Activated CD4-positive, alpha-beta memory T cell treated with anti-CD3 and anti-CD28 coated beads for 36 hours (primary cell): ENCODE measurements at regions of chr7 and their contacts with region 1.

Region 1: DNA sequence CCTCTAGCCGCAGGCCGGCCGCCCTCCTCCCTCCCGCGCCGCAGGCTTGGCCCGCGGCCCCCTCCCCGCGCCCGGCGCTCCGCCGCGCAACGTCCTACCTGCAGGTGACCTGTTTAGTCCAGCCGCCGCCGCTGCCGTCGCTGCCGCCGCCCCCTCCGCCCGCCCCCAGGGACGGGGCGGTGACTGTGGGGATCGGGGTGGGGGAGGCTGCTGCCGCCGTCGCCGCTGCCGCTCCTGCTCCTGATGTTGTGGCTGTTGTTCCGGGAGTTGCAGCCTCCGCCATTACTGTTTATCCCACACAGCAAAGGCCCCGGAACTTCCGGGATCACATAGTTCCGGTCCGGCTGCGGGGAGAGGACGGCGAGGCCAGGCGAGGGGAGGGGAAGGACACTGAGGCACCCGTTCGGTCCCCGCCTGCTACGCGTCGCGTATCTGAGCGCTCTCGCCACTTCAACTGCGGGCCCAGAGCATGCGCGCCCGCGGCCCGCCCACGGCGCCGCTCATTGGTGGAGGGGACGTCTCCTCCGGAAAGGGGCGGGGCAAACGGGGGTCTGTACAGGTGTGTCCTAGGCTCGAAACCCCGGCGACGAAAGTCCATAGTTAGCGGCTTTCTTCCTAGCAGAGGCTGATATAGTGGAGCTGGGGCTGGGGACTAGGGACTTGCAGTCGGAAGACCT is at the start of gene MKRN1:
- DNase-seq: peak; percentile 96
- H3K4me3 Mint-ChIP-seq: peak within 1 kb of the TSS; percentile 97
- H3K27ac Mint-ChIP-seq: peak within 1 kb of the TSS; percentile 96
- H3K4me1 Mint-ChIP-seq: peaks cover 27% of the 10 kb centered on the region
- H3K27me3 Mint-ChIP-seq: no peaks in the 10 kb centered on the region
- total RNA-seq, gene MKRN1: 104 to 106 TPM

Region 2: DNA sequence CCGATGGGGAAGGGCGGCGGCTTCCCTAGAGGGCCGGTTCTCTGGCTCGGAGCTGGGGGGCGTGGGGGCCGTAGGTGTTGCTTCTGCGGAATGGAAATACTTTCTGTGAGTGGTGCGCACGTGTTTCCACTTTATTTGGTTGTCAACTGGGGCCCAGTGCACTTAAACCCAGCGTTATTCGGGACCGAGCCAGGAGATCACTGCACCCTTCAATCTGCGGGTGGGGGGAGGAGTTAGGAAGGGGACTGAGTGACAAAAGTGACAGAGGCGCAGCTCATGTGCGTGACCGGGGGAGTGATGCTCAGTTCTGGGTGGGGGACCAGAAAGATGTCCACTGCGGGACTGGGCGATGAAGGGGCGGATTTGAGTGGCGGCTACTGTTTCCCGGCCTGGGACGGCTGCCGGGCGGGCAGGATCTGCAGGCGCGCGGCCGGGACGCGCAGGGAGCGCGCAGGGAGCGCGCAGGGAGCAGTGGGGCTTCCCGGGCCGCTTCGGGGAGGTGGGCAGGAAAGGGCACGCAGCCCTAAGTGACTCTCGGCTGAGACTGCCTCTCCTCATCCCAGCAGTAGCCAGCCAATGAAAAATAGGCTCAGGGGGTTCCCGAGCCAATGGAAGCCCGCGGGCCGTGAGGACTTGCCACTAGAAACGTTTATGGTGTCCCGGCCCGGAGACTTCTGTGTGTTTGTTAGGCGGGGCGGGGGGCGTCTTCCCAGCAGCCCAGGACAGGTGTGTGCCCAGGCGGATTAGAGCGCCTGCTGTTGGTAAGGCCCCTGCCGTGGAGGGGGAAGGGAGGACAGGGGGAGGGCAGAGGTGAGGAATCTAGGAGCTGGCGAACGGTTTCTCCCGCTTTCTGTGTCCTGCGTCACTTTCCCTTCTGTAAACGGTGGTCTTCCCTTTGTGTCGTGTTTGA is 248.1 kb before region 1 on chr7:
- CTCF ChIA-PET with region 1: no interaction called
- POLR2A ChIA-PET with region 1: interaction called, 5 read pairs
- intact Hi-C with region 1: loop called (anchors 5 kb)
- DNase-seq: peak; percentile 78
- H3K4me3 Mint-ChIP-seq: peak overlapping the region; percentile 79
- H3K27ac Mint-ChIP-seq: peak overlapping the region; percentile 99
- H3K4me1 Mint-ChIP-seq: peaks cover 32% of the 10 kb centered on the region
- H3K27me3 Mint-ChIP-seq: no peaks in the 10 kb centered on the region

Region 3: GRCh38 chr7:140390466-140391190 is 88.6 kb before region 1 on chr7:
- CTCF ChIA-PET with region 1: no interaction called
- POLR2A ChIA-PET with region 1: interaction called, 9 read pairs
- intact Hi-C with region 1: loop called (anchors 2 kb)
- DNase-seq: peak; percentile 65
- H3K4me3 Mint-ChIP-seq: no peak overlapping the region
- H3K27ac Mint-ChIP-seq: no peak overlapping the region
- H3K4me1 Mint-ChIP-seq: peaks cover 10% of the 10 kb centered on the region
- H3K27me3 Mint-ChIP-seq: no peaks in the 10 kb centered on the region

Region 4: GRCh38 chr7:140463111-140463510 is 16.1 kb before region 1 on chr7:
- CTCF ChIA-PET with region 1: interaction called, 7 read pairs
- POLR2A ChIA-PET with region 1: interaction called, 16 read pairs
- intact Hi-C with region 1: no loop called
- DNase-seq: no peak
- H3K4me3 Mint-ChIP-seq: no peak overlapping the region
- H3K27ac Mint-ChIP-seq: peak overlapping the region; percentile 18
- H3K4me1 Mint-ChIP-seq: peaks cover 24% of the 10 kb centered on the region
- H3K27me3 Mint-ChIP-seq: no peaks in the 10 kb centered on the region

Region 5: GRCh38 chr7:140696680-140697446 is 217.7 kb after region 1 on chr7 and contains the start of gene NDUFB2:
- CTCF ChIA-PET with region 1: no interaction called
- POLR2A ChIA-PET with region 1: interaction called, 3 read pairs
- intact Hi-C with region 1: loop called (anchors 2 kb)
- DNase-seq: peak; percentile 80
- H3K4me3 Mint-ChIP-seq: peak within 1 kb of the TSS; percentile 95
- H3K27ac Mint-ChIP-seq: peak within 1 kb of the TSS; percentile 97
- H3K4me1 Mint-ChIP-seq: peaks cover 32% of the 10 kb centered on the region
- H3K27me3 Mint-ChIP-seq: no peaks in the 10 kb centered on the region
- total RNA-seq, gene NDUFB2: 171 to 183 TPM